B cell (primary cell): ENCODE measurements at regions of chr2 and their contacts with region 1.

Region 1: DNA sequence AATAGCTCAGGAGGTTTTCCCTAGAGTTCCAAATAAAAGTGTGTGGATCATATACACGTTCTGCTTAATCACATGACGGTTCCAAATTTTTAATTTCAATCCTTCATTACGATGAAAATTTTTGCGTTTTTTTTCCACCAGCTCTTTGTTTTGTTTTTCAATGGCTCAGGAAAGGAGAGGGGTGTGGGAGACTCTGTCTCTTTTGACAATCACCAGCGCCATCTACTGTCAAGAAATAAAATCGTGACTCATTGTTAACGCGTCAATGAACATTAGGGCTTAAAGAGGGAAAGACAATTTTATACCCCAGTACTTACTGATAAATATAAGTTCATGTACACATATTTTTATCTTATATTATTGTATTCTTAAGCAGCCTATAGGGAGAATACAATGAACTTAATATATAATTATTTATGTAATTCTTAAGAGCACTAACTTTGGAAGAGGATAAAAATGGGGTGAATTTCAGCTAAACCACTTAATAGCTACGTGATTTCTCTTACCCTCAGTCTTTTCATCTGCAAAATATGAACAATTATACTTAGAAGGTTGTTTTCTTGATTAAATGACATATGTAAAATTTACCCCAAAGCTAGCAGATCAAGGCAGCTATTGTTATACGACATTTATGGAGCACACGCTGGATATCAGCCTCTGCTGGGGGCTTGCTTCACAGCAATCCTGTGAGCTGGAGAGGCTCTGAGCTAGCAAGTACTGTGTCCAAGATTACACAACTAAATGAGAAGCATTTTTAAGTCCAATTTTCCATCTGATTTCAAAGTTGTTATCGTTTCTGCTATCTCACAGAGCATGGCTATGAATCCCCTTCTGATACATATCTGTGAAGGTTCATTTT is 47.4 kb upstream of the RMDN2 start:
- DNase-seq: peak; percentile 76
- ATAC-seq: peak; percentile 43
- H3K4me3 ChIP-seq: no peak overlapping the region
- H3K4me3 Mint-ChIP-seq: no peak overlapping the region
- H3K27ac ChIP-seq: no peak overlapping the region
- H3K27ac Mint-ChIP-seq: no peak overlapping the region
- H3K4me1 ChIP-seq: no peaks in the 10 kb centered on the region
- H3K4me1 Mint-ChIP-seq: no peaks in the 10 kb centered on the region
- H3K27me3 ChIP-seq: peaks cover 0 to 6% (median 2%) of the 10 kb centered on the region in 4 experiments
- H3K27me3 Mint-ChIP-seq: peaks cover 31% of the 10 kb centered on the region
- CTCF ChIP-seq: peak; percentile 97

Region 2: DNA sequence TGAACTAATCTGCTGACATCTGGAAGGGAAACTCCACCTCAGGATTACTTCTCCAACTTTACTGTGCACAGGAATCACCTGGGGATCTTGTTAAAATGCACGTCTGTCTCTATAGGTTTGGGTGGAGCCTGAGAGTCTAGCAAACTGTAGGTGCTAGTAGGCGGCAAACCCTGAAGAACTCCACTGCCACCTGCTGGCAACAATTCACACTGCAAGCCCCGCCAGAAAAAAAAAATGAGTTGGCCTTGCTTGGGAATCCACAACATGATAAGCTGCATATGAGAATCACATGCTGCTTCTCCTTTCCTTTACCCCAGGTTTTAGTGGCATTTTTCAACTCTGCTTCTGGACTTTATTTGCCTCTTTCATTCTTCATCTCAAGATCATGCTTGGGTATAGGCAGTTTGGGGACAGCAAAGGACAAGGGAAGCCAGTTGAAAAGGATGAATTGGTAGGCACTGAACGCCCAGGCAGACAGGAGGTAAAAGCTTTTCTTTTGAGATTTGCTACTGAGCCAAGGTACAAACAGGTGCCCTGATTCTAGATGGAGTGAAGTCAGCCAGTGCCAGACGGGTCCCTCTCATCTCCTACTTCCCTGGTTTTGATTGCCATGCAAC is 1092.4 kb before region 1 on chr2:
- CTCF ChIA-PET with region 1: interaction called, 3 read pairs
- POLR2A ChIA-PET with region 1: no interaction called
- intact Hi-C with region 1: loop called (anchors 2 kb)
- DNase-seq: peak; percentile 73
- ATAC-seq: peak; percentile 75
- H3K4me3 ChIP-seq: no peak overlapping the region
- H3K4me3 Mint-ChIP-seq: no peak overlapping the region
- H3K27ac ChIP-seq: no peak overlapping the region
- H3K27ac Mint-ChIP-seq: no peak overlapping the region
- H3K4me1 ChIP-seq: peaks cover 9% of the 10 kb centered on the region in 2 donors
- H3K4me1 Mint-ChIP-seq: peaks cover 13% of the 10 kb centered on the region
- H3K27me3 ChIP-seq: peaks cover 0 to 2% (median 0%) of the 10 kb centered on the region in 4 experiments
- H3K27me3 Mint-ChIP-seq: peaks cover 18% of the 10 kb centered on the region
- CTCF ChIP-seq: peak; percentile 99

Region 3: GRCh38 chr2:37231241-37232130 is 646.2 kb before region 1 on chr2 and contains the starts of genes CEBPZ and NDUFAF7:
- CTCF ChIA-PET with region 1: no interaction called
- POLR2A ChIA-PET with region 1: no interaction called
- intact Hi-C with region 1: loop called (anchors 1 kb)
- DNase-seq: peak; percentile 90
- ATAC-seq: peak; percentile 92
- H3K4me3 ChIP-seq: peak within 1 kb of the TSS; percentile 76 to 95 (median 91)
- H3K4me3 Mint-ChIP-seq: no peak within 1 kb of the TSS
- H3K27ac ChIP-seq: peak within 1 kb of the TSS; percentile 85 to 90
- H3K27ac Mint-ChIP-seq: no peak within 1 kb of the TSS
- H3K4me1 ChIP-seq: peaks cover 26 to 28% of the 10 kb centered on the region in 2 donors
- H3K4me1 Mint-ChIP-seq: peaks cover 18% of the 10 kb centered on the region
- H3K27me3 ChIP-seq: no peaks in the 10 kb centered on the region
- H3K27me3 Mint-ChIP-seq: no peaks in the 10 kb centered on the region
- CTCF ChIP-seq: no peak
- total RNA-seq, gene CEBPZ: 43.9 and 56.5 TPM in 2 replicates
- total RNA-seq, gene NDUFAF7: 35.4 and 42.0 TPM in 2 replicates

Region 4: DNA sequence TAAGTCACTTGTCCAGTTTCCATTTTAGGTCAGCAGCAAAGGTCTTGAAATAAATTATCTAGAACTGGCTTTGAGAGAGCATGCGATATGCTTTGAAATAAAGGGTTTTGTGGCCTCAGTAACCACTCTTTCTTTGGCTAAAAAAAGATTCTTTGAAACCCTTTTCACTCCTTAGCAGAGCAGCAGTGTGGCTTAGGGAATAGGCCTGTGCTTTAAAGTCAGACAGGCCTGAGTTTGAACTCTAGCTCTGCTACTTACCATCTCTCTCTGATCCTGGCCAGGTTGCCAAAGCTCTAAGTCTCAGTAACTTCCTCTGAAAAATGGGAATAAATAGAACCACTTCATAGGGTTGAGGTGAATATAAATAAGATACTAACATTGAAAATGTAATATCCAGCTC is 480.5 kb before region 1 on chr2:
- CTCF ChIA-PET with region 1: interaction called, 147 read pairs
- POLR2A ChIA-PET with region 1: no interaction called
- intact Hi-C with region 1: loop called (anchors 1 kb)
- DNase-seq: no peak
- ATAC-seq: no peak
- H3K4me3 ChIP-seq: no peak overlapping the region
- H3K4me3 Mint-ChIP-seq: no peak overlapping the region
- H3K27ac ChIP-seq: no peak overlapping the region
- H3K27ac Mint-ChIP-seq: no peak overlapping the region
- H3K4me1 ChIP-seq: no peaks in the 10 kb centered on the region
- H3K4me1 Mint-ChIP-seq: peaks cover 4% of the 10 kb centered on the region
- H3K27me3 ChIP-seq: no peaks in the 10 kb centered on the region
- H3K27me3 Mint-ChIP-seq: no peaks in the 10 kb centered on the region
- CTCF ChIP-seq: no peak

Region 5: DNA sequence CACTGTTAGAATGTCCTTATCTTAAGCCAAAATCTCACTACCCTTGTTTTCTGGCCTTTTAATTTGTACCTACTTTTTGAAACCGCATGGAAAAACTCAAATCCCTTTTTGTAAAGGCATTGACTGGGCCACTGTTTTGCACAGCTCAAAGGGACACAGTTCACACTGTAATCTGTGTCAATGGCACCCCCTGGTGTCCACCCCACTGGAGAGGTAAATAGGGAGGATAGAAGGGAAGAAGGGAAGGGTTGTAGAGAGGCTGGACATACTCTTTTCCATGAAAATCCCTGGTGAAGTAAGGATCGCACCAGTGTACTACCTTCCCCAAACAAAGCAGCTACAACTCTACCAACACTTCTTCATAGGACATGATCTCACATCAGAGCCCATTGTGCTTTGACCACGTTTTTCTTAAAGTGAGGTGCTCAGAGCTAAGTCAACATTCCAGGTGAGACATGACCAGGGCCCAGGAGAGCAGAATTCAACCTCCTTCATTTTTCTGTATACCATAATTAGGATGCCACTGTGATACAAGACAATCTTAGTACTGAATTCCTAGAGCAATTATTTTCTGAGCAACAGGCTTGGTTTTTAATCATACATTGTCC is 45.0 kb before region 1 on chr2:
- CTCF ChIA-PET with region 1: interaction called, 34 read pairs
- POLR2A ChIA-PET with region 1: no interaction called
- intact Hi-C with region 1: loop called (anchors 1 kb)
- DNase-seq: peak; percentile 82
- ATAC-seq: peak; percentile 94
- H3K4me3 ChIP-seq: no peak overlapping the region
- H3K4me3 Mint-ChIP-seq: no peak overlapping the region
- H3K27ac ChIP-seq: no peak overlapping the region
- H3K27ac Mint-ChIP-seq: no peak overlapping the region
- H3K4me1 ChIP-seq: no peaks in the 10 kb centered on the region
- H3K4me1 Mint-ChIP-seq: peaks cover 2% of the 10 kb centered on the region
- H3K27me3 ChIP-seq: no peaks in the 10 kb centered on the region
- H3K27me3 Mint-ChIP-seq: no peaks in the 10 kb centered on the region
- CTCF ChIP-seq: peak; percentile 93

Region 6: DNA sequence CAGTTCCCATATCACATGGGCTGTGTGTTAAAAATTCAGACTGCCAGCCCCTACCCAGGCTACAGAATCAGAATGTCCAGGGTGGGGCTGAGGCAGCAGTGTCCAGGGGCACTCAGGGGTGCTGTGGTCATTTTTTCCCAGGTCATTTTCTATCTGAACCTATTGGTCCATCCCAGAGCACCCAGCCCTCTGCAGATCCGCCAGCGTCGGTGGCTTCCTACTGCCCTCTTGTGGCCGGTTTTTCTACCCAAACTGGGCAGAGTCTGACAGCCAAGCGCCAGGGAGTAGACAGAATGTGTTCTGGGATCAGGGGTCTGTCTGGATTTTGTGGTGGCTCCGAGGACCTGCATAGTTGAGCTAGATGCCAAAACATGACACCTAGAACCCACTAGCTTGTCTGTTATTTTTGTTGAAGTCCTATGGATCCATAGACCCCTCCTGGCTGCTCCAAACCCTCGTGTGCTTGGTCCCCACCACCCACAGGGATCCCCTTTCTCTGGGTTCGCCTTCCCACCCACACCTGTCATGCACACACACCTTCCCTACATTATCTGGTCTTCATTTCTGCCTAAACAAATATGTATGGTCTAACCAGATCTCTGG is 13.3 kb after region 1 on chr2:
- CTCF ChIA-PET with region 1: interaction called, 29 read pairs
- POLR2A ChIA-PET with region 1: no interaction called
- intact Hi-C with region 1: no loop called
- DNase-seq: peak; percentile 73
- ATAC-seq: peak; percentile 51
- H3K4me3 ChIP-seq: no peak overlapping the region
- H3K4me3 Mint-ChIP-seq: peak overlapping the region; percentile 23
- H3K27ac ChIP-seq: no peak overlapping the region
- H3K27ac Mint-ChIP-seq: no peak overlapping the region
- H3K4me1 ChIP-seq: peaks cover 28 to 31% of the 10 kb centered on the region in 2 donors
- H3K4me1 Mint-ChIP-seq: peaks cover 35% of the 10 kb centered on the region
- H3K27me3 ChIP-seq: no peaks in the 10 kb centered on the region
- H3K27me3 Mint-ChIP-seq: peaks cover 2% of the 10 kb centered on the region
- CTCF ChIP-seq: peak; percentile 84